ENCODE measurements at regions of chr21 and their contacts with region 1.

Region 1: GRCh38 chr21:18369115-18369514 is 34.5 kb downstream of the TMPRSS15 start:
- DNase-seq: no peak
- ATAC-seq: no peak

Region 2: GRCh38 chr21:17454315-17455027 is 914.6 kb before region 1 on chr21:
- intact Hi-C with region 1: loop called (anchors 5 kb)
- DNase-seq: peak; percentile 71
- ATAC-seq: peak; percentile 85

Measured in sciatic nerve (tissue), 2 donors.